ENCODE measurements at regions of chr1 and their contacts with region 1.

Region 1: DNA sequence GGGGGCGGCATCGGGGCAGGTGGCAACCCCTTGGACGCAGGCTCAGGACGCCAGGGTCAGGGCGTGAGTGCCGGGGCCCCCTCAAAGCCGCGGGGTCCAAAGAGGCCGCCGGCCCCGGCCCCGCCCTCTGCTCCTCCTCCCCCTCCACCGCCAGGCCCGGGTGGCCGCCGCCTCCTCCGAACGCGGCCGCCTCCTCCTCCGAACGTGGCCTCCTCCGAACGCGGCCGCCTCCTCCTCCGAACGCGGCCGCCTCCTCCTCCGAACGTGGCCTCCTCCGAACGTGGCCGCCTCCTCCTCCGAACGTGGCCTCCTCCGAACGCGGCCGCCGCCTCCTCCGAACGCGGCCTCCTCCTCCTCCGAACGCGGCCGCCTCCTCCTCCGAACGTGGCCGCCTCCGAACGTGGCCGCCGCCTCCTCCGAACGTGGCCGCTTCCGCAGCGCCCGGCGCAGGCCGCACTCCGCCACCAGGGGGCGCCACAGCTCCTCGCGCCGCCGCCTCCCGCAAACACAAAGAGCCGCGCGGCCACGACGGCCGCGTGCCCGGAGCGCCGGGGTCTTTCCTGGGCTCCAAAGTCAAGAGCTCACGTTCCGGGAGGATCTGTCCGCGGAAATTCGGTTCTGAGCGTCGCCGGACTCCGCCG is 19.3 kb upstream of the SAMD11 start:
- DNase-seq: peak; percentile 65 to 91 (median 75)
- H3K4me3 ChIP-seq: peak overlapping the region; percentile 25
- H3K27ac ChIP-seq: no peak overlapping the region
- H3K4me1 ChIP-seq: no peaks in the 10 kb centered on the region
- H3K27me3 ChIP-seq: no peaks in the 10 kb centered on the region
- CTCF ChIP-seq: peak; percentile 71 to 88 (median 85)
- EP300 ChIP-seq: no peak
- POLR2A ChIP-seq: no peak

Region 2: GRCh38 chr1:2556277-2556677 is 1651.8 kb after region 1 on chr1 and contains the start of gene TNFRSF14:
- intact Hi-C with region 1: loop called in 1 of 4 experiments (anchors 10 kb)
- DNase-seq: peak; percentile 49 to 69 (median 61)
- H3K4me3 ChIP-seq: peak within 1 kb of the TSS; percentile 64
- H3K27ac ChIP-seq: peak within 1 kb of the TSS; percentile 82 to 88
- H3K4me1 ChIP-seq: peaks cover 12% of the 10 kb centered on the region
- H3K27me3 ChIP-seq: no peaks in the 10 kb centered on the region
- CTCF ChIP-seq: no peak
- EP300 ChIP-seq: no peak
- POLR2A ChIP-seq: peak; percentile 14
- total RNA-seq, gene TNFRSF14: 33.3 to 78.5 (median 60.5) TPM